ENCODE measurements at regions of chr3 and their contacts with region 1.

Region 1: GRCh38 chr3:194134757-194135528 is 1.0 kb upstream of the HES1 start:
- DNase-seq: peak; percentile 92
- H3K4me3 ChIP-seq: peak overlapping the region; percentile 86
- H3K27ac ChIP-seq: peak overlapping the region; percentile 99
- H3K4me1 ChIP-seq: peaks cover 80% of the 10 kb centered on the region
- H3K27me3 ChIP-seq: no peaks in the 10 kb centered on the region
- CTCF ChIP-seq: no peak

Region 2: DNA sequence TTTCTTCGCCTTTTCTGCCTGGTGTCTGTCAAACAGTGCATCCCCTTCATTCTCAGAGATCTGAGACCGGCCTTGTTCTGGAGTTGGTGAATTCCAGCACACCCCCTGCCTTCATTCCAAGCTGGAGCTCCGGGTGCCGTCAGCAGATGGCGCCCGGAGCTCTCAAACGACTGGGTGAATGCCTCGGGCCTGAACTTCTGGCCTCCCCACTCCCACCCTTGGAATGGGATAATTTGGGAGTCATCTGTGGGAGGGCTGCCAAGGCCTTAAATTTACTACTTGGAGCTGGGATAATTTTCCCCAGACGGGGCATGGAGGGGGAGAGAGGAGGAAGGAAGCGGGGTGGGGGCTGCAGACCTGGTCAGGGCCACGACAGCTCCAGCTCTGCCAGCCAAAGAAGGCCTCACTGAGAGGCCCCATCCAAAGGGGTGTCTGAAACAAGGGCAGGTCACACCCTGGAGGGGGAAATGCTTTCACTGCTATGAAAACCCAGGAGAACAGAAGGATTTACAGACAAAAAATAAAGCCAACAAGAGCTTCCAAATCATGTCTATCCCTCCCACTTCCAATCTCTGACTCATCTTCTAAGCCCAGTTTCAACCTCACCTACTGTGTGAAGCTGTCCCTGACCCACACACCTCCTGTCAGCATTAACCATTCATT is 354.0 kb before region 1 on chr3:
- intact Hi-C with region 1: loop called (anchors 5 kb)
- DNase-seq: peak; percentile 69
- H3K4me3 ChIP-seq: no peak overlapping the region
- H3K27ac ChIP-seq: peak overlapping the region; percentile 29
- H3K4me1 ChIP-seq: peaks cover 12% of the 10 kb centered on the region
- H3K27me3 ChIP-seq: peaks cover 87% of the 10 kb centered on the region
- CTCF ChIP-seq: peak; percentile 89

Region 3: GRCh38 chr3:193943200-193943599 is 191.7 kb before region 1 on chr3:
- intact Hi-C with region 1: no loop called
- DNase-seq: no peak
- H3K4me3 ChIP-seq: no peak overlapping the region
- H3K27ac ChIP-seq: no peak overlapping the region
- H3K4me1 ChIP-seq: no peaks in the 10 kb centered on the region
- H3K27me3 ChIP-seq: peaks cover 55% of the 10 kb centered on the region
- CTCF ChIP-seq: no peak

Region 4: DNA sequence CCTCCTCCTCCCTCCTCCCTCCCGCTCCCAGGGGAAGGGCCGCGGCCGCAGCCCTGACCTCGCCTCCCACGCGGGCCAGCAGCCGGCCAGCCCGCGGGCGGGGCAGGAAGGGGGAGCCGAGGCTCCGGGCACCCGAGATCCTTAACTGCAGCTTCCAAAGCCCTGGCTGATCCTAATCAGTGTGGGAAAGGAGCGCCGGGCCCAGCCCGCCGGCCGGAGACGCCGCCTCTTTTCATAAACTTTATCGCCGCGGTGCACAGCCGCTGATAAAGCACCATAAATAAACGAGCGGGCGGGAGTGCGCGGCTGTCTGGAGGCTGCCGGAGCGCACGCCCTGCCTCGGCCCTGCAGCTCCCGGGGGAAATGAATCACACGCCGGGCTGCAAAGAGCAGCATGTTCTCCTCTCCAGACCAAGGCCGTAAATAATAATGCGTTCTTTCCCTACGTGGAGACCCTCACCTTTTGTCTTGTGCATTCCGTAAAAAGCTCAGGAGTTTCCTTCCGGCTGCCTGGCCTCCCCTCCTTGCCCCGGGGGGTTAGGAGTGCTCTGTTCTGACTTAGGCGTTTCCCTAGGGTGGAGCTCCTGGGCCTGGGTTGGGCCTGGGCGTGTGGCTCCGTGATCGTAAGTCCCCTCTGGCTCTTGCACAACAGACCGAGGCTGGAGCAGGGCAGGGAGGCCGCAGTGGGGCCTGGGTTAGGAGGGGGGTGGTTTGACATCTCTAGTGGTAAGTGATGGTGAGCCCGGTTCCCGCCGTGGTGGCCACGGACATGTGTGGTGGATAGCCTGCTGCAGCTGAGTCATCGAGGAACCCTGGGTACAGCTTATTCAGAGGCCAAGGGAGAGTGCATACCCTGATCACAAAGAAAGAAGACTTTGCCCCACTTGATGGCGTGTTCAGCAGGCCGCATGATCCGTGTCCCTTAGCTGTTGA is 131.6 kb before region 1 on chr3:
- intact Hi-C with region 1: loop called (anchors 2 kb)
- DNase-seq: peak; percentile 92
- H3K4me3 ChIP-seq: peak overlapping the region; percentile 63
- H3K27ac ChIP-seq: peak overlapping the region; percentile 84
- H3K4me1 ChIP-seq: peaks cover 49% of the 10 kb centered on the region
- H3K27me3 ChIP-seq: peaks cover 39% of the 10 kb centered on the region
- CTCF ChIP-seq: no peak

Region 5: GRCh38 chr3:194306109-194306686 is 171.3 kb after region 1 on chr3:
- intact Hi-C with region 1: loop called (anchors 10 kb)
- DNase-seq: no peak
- H3K4me3 ChIP-seq: no peak overlapping the region
- H3K27ac ChIP-seq: no peak overlapping the region
- H3K4me1 ChIP-seq: peaks cover 4% of the 10 kb centered on the region
- H3K27me3 ChIP-seq: peaks cover 45% of the 10 kb centered on the region
- CTCF ChIP-seq: no peak